Heart right ventricle (tissue), 16 donors: ENCODE measurements at regions of chr7 and their contacts with region 1.

Region 1: GRCh38 chr7:139340037-139340807 is 915 bp upstream of the FMC1 start:
- DNase-seq: peak; percentile 95 to 99
- ATAC-seq: peak; percentile 87 to 93 (median 90)
- H3K4me3 ChIP-seq: peak overlapping the region; percentile 59 to 93 (median 82)
- H3K27ac ChIP-seq: peak overlapping the region; percentile 98 to 100 (median 99)
- H3K4me1 ChIP-seq: peaks cover 0 to 20% (median 13%) of the 10 kb centered on the region in 9 donors
- H3K27me3 ChIP-seq: no peaks in the 10 kb centered on the region
- CTCF ChIP-seq: peak; percentile 57 to 94 (median 80)

Region 2: DNA sequence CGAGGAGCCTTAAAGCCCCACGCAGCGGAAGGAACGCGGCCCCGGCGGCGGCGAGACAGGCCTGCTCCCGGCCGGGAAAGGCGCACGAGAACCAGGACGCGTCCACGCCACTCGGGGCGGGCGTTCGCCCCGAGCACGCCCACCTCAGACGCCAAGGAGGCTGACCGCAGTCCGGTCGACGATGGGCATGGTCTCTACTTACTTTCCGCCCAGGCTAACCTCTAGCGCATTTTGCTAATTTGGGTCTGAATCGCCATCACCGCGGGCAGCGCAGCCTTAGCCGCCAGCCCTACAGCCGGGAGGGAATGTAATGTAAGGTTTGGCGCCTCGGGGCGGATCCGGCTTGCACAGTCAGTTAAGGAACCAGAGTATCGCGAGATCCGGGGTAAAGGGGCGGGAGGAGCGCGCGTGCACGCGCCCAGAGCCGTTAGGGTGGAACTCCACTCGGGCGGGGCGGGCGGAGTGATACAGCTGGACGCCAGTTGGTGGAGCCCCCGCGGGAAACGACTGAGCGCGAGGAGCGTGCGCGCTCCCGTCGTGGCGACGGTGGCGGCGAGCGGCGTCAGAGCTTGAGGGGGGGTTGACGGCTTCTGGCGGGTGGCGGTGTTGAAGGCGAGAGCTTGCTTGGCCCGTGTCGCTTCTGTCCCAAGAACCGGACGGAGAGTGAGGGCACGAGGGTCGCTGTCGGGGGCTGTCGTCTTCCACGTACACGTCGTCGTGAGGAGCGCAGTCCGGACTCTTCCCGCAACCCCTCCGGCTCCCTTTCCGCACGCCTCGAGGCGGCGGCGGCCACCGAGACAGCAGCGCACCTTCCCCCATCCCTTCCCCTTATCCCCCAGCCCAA is 19.4 kb after region 1 on chr7 and contains the start of gene LUC7L2:
- intact Hi-C with region 1: loop called in 8 of 10 experiments (anchors 1 to 2 kb)
- DNase-seq: peak; percentile 100
- ATAC-seq: peak; percentile 96 to 98 (median 96)
- H3K4me3 ChIP-seq: peak within 1 kb of the TSS; percentile 81 to 96 (median 88)
- H3K27ac ChIP-seq: peak within 1 kb of the TSS; percentile 99 to 100 (median 99)
- H3K4me1 ChIP-seq: peaks cover 0 to 49% (median 41%) of the 10 kb centered on the region in 9 donors
- H3K27me3 ChIP-seq: no peaks in the 10 kb centered on the region
- CTCF ChIP-seq: peak in 2 of 9 donors; percentile 16 to 27
- total RNA-seq, gene LUC7L2: 43.5 to 50.1 (median 47.8) TPM